BJ (cell line): ENCODE measurements at regions of chr1 and their contacts with region 1.

Region 1: GRCh38 chr1:112369392-112370285 is 26.4 kb upstream of the CTTNBP2NL start:
- DNase-seq: no peak
- H3K4me3 ChIP-seq: no peak overlapping the region
- H3K27me3 ChIP-seq: peaks cover 12% of the 10 kb centered on the region
- CTCF ChIP-seq: peak; percentile 99

Region 2: GRCh38 chr1:112298558-112298957 is 71.1 kb before region 1 on chr1:
- CTCF ChIA-PET with region 1: interaction called, 48 read pairs
- POLR2A ChIA-PET with region 1: no interaction called
- DNase-seq: no peak
- H3K4me3 ChIP-seq: no peak overlapping the region
- H3K27me3 ChIP-seq: no peaks in the 10 kb centered on the region; the same call in 1 of the 2 replicates
- CTCF ChIP-seq: peak; percentile 72

Region 3: DNA sequence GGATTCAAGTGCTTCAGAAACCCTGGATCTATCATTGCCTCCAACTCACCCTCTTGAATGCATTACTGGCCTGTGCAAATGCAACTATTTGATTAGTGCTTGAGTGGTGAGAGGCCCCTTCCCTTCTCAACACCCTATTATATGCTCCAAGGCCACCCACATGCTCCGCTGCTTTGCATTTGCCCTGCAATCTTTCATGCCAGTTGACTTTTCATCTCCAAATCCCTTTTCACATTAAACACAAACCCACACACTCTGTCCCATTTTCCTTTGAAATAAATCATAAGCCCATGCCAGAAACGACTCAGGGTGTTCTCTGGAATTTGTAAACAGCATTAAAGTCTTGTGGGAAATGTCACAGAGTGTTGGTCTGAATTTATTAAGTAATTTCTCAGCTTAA is 52.5 kb before region 1 on chr1:
- CTCF ChIA-PET with region 1: no interaction called
- POLR2A ChIA-PET with region 1: no interaction called
- DNase-seq: no peak
- H3K4me3 ChIP-seq: no peak overlapping the region
- H3K27me3 ChIP-seq: peaks cover 10% of the 10 kb centered on the region
- CTCF ChIP-seq: no peak

Region 4: DNA sequence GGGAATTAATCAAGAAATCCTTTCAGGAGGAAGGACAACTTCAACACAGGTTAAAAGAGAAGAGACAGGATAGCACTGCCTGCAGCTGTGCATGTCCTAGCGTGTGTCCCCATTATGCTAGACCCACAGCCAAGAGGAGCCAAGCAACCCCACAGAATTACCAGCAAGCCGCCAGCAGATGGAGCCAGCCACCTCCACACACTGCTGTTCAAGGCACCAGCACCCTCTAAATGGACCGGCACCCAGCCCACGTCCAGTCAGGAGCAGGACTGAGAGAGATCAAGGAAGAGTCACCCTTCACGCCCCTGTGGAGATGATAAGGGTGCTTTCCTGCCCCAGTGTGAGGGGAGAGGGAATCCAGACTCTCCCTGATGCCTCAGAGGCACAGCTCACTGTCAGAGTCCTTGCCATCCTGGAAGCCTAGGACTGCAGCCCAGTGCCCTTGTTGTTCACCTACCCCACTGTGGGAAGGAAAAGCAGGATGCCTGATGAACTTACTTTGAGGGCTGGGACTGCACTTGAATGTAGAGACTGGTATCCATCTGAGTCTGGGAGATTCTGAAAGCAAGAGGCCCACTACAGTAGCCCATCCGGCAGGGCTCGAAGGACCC is 10.7 kb before region 1 on chr1:
- CTCF ChIA-PET with region 1: interaction called, 139 read pairs
- POLR2A ChIA-PET with region 1: interaction called, 3 read pairs
- DNase-seq: no peak
- H3K4me3 ChIP-seq: no peak overlapping the region
- H3K27me3 ChIP-seq: peaks cover 21% of the 10 kb centered on the region
- CTCF ChIP-seq: peak; percentile 91

Region 5: DNA sequence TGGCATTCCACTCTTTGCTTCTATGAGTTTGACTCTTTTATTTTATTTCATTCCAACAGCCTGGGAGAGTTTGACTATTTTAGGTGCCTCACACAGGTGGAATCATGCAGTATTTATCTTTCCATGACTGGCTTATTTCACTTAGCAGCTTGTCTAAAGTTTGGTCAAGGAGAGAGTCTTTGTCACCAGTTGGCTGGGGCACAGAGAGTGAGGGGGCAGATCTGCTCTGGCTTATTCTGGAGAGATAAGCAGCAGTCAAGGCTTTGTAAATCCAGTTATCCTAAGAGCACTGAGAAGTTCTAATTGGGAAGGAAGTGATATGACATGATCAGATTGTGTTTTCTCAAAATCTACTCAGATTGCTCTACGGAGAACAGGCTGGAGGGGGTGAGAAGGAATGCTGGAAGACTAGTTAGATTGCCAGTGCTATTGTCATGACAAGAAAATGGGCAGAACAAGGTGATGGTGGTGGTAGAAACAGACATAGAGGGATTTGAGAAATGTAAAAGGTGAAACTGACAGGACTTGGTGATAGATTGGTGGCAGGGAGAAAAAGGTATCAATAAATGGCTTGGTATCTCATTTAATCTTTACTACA is 14.2 kb after region 1 on chr1:
- CTCF ChIA-PET with region 1: interaction called, 39 read pairs
- POLR2A ChIA-PET with region 1: no interaction called
- DNase-seq: no peak
- H3K4me3 ChIP-seq: no peak overlapping the region
- H3K27me3 ChIP-seq: peaks cover 13% of the 10 kb centered on the region
- CTCF ChIP-seq: no peak

Region 6: DNA sequence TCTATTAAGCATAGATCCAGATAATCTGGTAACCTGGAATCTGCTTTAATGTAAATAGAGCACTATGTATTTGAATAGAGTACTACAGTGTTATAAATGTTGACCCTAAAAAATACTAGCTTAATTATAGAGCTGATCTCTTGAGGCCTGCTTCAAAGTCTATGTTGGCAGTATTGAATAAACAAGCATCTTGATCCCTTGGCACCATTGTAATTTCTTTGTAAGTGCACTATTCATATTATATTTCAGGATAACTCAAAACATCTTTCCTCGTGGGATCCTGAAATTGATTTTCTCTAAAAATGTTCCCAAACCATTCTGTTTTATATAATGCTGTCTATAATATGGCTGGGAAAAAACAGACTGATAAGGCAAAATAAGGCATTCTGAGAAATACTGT is 37.1 kb after region 1 on chr1:
- CTCF ChIA-PET with region 1: no interaction called
- POLR2A ChIA-PET with region 1: no interaction called
- DNase-seq: no peak
- H3K4me3 ChIP-seq: no peak overlapping the region
- H3K27me3 ChIP-seq: no peaks in the 10 kb centered on the region
- CTCF ChIP-seq: no peak